ENCODE measurements at regions of chr7 and their contacts with region 1.

Region 1: DNA sequence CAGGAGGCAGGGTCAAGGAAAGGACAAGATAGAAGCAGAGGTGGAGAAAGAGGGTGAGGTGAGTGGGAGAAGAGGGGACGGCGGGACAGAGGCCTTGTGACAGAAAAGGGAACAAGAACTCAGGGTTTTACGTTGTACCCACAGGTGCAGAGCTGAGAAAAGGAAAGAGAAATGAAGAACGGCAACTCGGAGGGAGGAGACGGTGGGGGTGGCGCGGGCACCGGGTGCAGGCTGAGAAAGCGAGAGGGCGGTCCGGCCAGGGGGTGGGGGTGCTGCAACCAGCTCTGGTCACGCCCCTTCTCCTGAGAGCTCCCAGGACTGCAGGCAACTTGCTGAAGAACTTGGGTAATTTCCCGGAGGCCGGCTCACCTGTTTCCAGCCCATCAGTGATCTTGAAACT is 65.3 kb downstream of the CARD11 start:
- DNase-seq: peak; percentile 91
- ATAC-seq: peak; percentile 93
- H3K4me3 ChIP-seq: peak overlapping the region; percentile 60
- H3K27ac ChIP-seq: peak overlapping the region; percentile 78
- H3K4me1 ChIP-seq: peaks cover 44% of the 10 kb centered on the region
- H3K27me3 ChIP-seq: no peaks in the 10 kb centered on the region
- CTCF ChIP-seq: no peak
- EP300 ChIP-seq: peak; percentile 88 to 92; a peak in 3 of 4 replicates
- POLR2A ChIP-seq: no peak
- RAD21 ChIP-seq: no peak

Region 2: GRCh38 chr7:2894118-2894940 is 84.1 kb before region 1 on chr7:
- CTCF ChIA-PET with region 1: interaction called, 5 read pairs
- POLR2A ChIA-PET with region 1: interaction called, 4 read pairs
- RAD21 ChIA-PET with region 1: interaction called, 34 read pairs
- SMC1A ChIA-PET with region 1: interaction called, 26 read pairs
- in situ Hi-C with region 1: no loop called
- intact Hi-C with region 1: loop called (anchors 2 kb)
- DNase-seq: peak; percentile 51
- ATAC-seq: peak; percentile 86
- H3K4me3 ChIP-seq: peak overlapping the region; percentile 51
- H3K27ac ChIP-seq: peak overlapping the region; percentile 84
- H3K4me1 ChIP-seq: peaks cover 23% of the 10 kb centered on the region
- H3K27me3 ChIP-seq: no peaks in the 10 kb centered on the region
- CTCF ChIP-seq: no peak
- EP300 ChIP-seq: peak; percentile 37 to 73; a peak in 1 of 4 replicates
- POLR2A ChIP-seq: peak; percentile 54
- RAD21 ChIP-seq: no peak

Region 3: GRCh38 chr7:3134715-3135114 is 156.3 kb after region 1 on chr7:
- CTCF ChIA-PET with region 1: no interaction called
- POLR2A ChIA-PET with region 1: no interaction called
- RAD21 ChIA-PET with region 1: no interaction called
- SMC1A ChIA-PET with region 1: no interaction called
- in situ Hi-C with region 1: no loop called
- intact Hi-C with region 1: no loop called
- DNase-seq: no peak
- ATAC-seq: no peak
- H3K4me3 ChIP-seq: no peak overlapping the region
- H3K27ac ChIP-seq: no peak overlapping the region
- H3K4me1 ChIP-seq: no peaks in the 10 kb centered on the region
- H3K27me3 ChIP-seq: no peaks in the 10 kb centered on the region
- CTCF ChIP-seq: no peak
- EP300 ChIP-seq: no peak
- POLR2A ChIP-seq: no peak
- RAD21 ChIP-seq: no peak

Measured in GM12878 (cell line).